ENCODE measurements at regions of chr1 and their contacts with region 1.

Region 1: DNA sequence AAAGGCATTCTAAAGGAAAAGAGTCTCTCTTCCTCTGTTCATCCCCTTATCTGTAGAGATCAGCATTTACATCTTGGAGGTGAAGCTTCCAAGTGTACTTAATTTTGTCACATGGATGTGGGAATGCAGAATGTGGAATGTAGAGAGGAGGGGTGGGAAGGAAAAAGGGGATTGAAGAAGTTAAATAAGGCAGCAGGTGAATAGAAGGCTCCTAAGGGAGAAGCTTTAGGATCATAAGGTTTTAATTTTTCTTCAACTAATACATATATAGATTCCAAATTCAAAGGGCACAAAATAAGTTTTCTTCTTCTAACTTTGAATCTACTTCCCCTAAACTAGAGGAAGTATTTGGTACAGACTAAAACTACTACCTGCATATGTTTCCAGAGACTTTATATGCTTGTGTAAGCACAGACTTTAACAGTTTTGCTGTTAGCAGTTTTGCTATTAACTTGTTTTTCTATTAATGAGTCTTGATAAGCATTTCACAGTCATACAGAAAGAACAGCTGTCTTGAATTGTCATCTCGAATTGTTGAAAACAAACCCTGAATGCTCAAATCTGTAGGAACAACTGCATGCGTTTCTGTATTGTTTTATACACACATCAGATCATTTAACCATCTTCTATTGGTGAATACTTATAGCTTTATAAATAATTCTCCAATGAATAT is 12.7 kb downstream of the TENT5C start:
- DNase-seq: no peak
- ATAC-seq: no peak
- H3K4me3 ChIP-seq: no peak overlapping the region
- H3K4me3 Mint-ChIP-seq: no peak overlapping the region
- H3K27ac ChIP-seq: no peak overlapping the region
- H3K27ac Mint-ChIP-seq: no peak overlapping the region
- H3K4me1 ChIP-seq: peaks cover 0 to 39% of the 10 kb centered on the region in 2 experiments
- H3K4me1 Mint-ChIP-seq: peaks cover 31 to 78% (median 67%) of the 10 kb centered on the region in 3 donors
- H3K27me3 ChIP-seq: no peaks in the 10 kb centered on the region
- H3K27me3 Mint-ChIP-seq: no peaks in the 10 kb centered on the region

Region 2: GRCh38 chr1:117367047-117368018 is 251.3 kb before region 1 on chr1 and contains the start of gene MAN1A2:
- CTCF ChIA-PET with region 1: no interaction called
- POLR2A ChIA-PET with region 1: interaction called in 1 of 2 experiments, 12 read pairs
- DNase-seq: peak in 34 of 35 experiments; percentile 30 to 79 (median 56)
- ATAC-seq: peak; percentile 71 to 74 (median 72)
- H3K4me3 ChIP-seq: peak within 1 kb of the TSS; percentile 78 to 94
- H3K4me3 Mint-ChIP-seq: peak within 1 kb of the TSS; percentile 94 to 97 (median 95)
- H3K27ac ChIP-seq: peak within 1 kb of the TSS; percentile 89
- H3K27ac Mint-ChIP-seq: peak within 1 kb of the TSS; percentile 98
- H3K4me1 ChIP-seq: peaks cover 28 to 41% of the 10 kb centered on the region in 2 experiments
- H3K4me1 Mint-ChIP-seq: peaks cover 61 to 83% (median 71%) of the 10 kb centered on the region in 3 donors
- H3K27me3 ChIP-seq: no peaks in the 10 kb centered on the region
- H3K27me3 Mint-ChIP-seq: no peaks in the 10 kb centered on the region
- total RNA-seq, gene MAN1A2: 43.3 to 64.4 (median 51.4) TPM

Region 3: DNA sequence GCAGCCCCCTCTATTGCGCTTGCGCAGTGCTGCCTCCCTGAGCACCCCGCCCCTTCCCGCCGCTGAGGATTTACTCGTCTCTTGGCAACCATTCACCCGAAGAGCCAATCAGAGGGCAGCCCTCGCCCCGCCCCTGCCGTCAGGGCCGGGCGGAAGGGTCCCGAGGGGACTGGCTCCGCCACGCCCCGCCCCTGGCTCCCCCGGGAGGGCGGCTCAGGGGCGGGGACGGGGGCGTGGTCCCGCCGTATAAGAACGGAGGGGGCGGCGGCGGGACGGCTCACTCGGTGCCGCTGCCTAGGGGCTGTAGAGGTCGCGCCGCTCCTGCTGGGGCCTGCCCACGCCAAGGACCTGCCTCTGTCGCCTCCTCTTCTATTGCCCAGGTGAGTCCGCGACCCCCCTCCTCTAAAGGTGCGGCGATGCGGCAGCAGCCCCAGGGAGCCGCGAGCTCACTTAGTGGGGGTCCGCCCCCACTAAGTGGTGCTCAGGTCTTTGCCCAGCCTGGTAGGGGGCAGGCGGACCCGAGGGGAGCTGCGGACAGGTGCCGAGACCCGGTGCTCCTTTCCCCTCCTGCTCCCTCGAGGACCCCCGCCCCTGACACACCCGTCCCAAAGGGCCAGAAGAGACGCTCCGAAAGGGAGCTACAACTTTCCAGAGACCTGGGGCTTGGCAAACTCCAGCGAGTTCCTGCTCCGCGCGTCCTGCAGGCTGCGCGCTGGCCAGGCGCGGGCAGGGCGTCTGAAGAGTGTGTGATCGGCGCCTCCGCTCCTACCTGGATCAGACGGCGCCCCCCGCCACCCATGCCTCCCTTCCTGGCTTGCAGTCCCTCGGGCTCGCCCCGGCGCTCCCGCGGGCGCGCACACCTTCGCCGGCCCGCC is 12.6 kb before region 1 on chr1 and contains the start of gene TENT5C:
- CTCF ChIA-PET with region 1: interaction called, 3 to 7 read pairs
- POLR2A ChIA-PET with region 1: interaction called, 5 to 20 read pairs
- DNase-seq: peak; percentile 96 to 99 (median 98)
- ATAC-seq: peak; percentile 90 to 96 (median 92)
- H3K4me3 ChIP-seq: peak within 1 kb of the TSS; percentile 91 to 92
- H3K4me3 Mint-ChIP-seq: peak within 1 kb of the TSS; percentile 97 to 98 (median 98)
- H3K27ac ChIP-seq: peak within 1 kb of the TSS; percentile 94
- H3K27ac Mint-ChIP-seq: peak within 1 kb of the TSS; percentile 95 to 98
- H3K4me1 ChIP-seq: peaks cover 11 to 32% of the 10 kb centered on the region in 2 experiments
- H3K4me1 Mint-ChIP-seq: peaks cover 41 to 52% (median 45%) of the 10 kb centered on the region in 3 donors
- H3K27me3 ChIP-seq: peaks cover 2% of the 10 kb centered on the region in 2 experiments
- H3K27me3 Mint-ChIP-seq: no peaks in the 10 kb centered on the region
- total RNA-seq, gene TENT5C: 7.6 to 133 (median 11.2) TPM

Region 4: DNA sequence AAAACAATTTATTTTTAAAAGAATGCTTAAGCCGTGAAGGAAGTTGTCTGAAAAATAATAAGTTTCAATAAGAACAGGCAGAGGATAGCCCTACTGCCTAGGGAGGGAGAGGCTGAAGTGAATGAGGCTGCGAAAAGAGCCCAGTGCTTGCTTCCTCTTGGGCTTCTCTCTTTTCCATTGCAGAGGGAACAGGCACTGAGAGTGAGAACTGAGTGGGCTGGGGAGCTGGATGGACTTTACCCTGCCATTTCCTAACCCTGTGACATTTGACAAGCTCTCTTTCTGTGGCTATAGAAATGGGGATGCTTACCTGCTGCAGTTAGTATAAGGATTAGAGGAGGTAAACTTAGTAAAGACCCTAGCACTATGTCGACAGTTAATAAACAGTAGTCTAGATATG is 17.2 kb after region 1 on chr1:
- CTCF ChIA-PET with region 1: no interaction called
- POLR2A ChIA-PET with region 1: no interaction called
- DNase-seq: no peak
- ATAC-seq: no peak
- H3K4me3 ChIP-seq: no peak overlapping the region
- H3K4me3 Mint-ChIP-seq: no peak overlapping the region
- H3K27ac ChIP-seq: no peak overlapping the region
- H3K27ac Mint-ChIP-seq: no peak overlapping the region
- H3K4me1 ChIP-seq: peaks cover 0 to 11% of the 10 kb centered on the region in 2 experiments
- H3K4me1 Mint-ChIP-seq: peaks cover 20 to 40% (median 33%) of the 10 kb centered on the region in 3 donors
- H3K27me3 ChIP-seq: no peaks in the 10 kb centered on the region
- H3K27me3 Mint-ChIP-seq: peaks cover 0 to 22% of the 10 kb centered on the region in 2 donors

Region 5: GRCh38 chr1:117664314-117664713 is 45.7 kb after region 1 on chr1:
- CTCF ChIA-PET with region 1: interaction called, 3 read pairs
- POLR2A ChIA-PET with region 1: interaction called in 1 of 2 experiments, 11 read pairs
- DNase-seq: peak in 33 of 35 experiments; percentile 30 to 91 (median 65)
- ATAC-seq: peak; percentile 84 to 92 (median 92)
- H3K4me3 ChIP-seq: no peak overlapping the region
- H3K4me3 Mint-ChIP-seq: peak overlapping the region in 1 of 3 donors; percentile 42
- H3K27ac ChIP-seq: peak overlapping the region; percentile 93
- H3K27ac Mint-ChIP-seq: peak overlapping the region; percentile 90 to 92
- H3K4me1 ChIP-seq: peaks cover 25 to 69% of the 10 kb centered on the region in 2 experiments
- H3K4me1 Mint-ChIP-seq: peaks cover 66 to 84% (median 79%) of the 10 kb centered on the region in 3 donors
- H3K27me3 ChIP-seq: peaks cover 0 to 5% of the 10 kb centered on the region in 2 experiments
- H3K27me3 Mint-ChIP-seq: peaks cover 0 to 4% of the 10 kb centered on the region in 2 donors